Activated CD8-positive, alpha-beta T cell treated with anti-CD3 and anti-CD28 coated beads for 36 hours (primary cell): ENCODE measurements at regions of chr4 and their contacts with region 1.

Region 1: GRCh38 chr4:53558065-53558801 is 33.1 kb downstream of the LNX1 start:
- DNase-seq: no peak
- ATAC-seq: no peak
- H3K4me3 Mint-ChIP-seq: no peak overlapping the region
- H3K27ac Mint-ChIP-seq: no peak overlapping the region
- H3K4me1 Mint-ChIP-seq: no peaks in the 10 kb centered on the region
- H3K27me3 Mint-ChIP-seq: peaks cover 4% of the 10 kb centered on the region
- CTCF ChIP-seq: no peak

Region 2: GRCh38 chr4:53541577-53542206 is 16.5 kb before region 1 on chr4:
- CTCF ChIA-PET with region 1: no interaction called
- POLR2A ChIA-PET with region 1: no interaction called
- intact Hi-C with region 1: no loop called
- DNase-seq: no peak
- ATAC-seq: no peak
- H3K4me3 Mint-ChIP-seq: no peak overlapping the region
- H3K27ac Mint-ChIP-seq: no peak overlapping the region
- H3K4me1 Mint-ChIP-seq: no peaks in the 10 kb centered on the region
- H3K27me3 Mint-ChIP-seq: peaks cover 3% of the 10 kb centered on the region
- CTCF ChIP-seq: no peak

Region 3: GRCh38 chr4:53633608-53634007 is 75.4 kb after region 1 on chr4:
- CTCF ChIA-PET with region 1: no interaction called
- POLR2A ChIA-PET with region 1: no interaction called
- intact Hi-C with region 1: loop called (anchors 10 kb)
- DNase-seq: no peak
- ATAC-seq: no peak
- H3K4me3 Mint-ChIP-seq: no peak overlapping the region
- H3K27ac Mint-ChIP-seq: no peak overlapping the region
- H3K4me1 Mint-ChIP-seq: no peaks in the 10 kb centered on the region
- H3K27me3 Mint-ChIP-seq: peaks cover 24% of the 10 kb centered on the region
- CTCF ChIP-seq: no peak